Common myeloid progenitor, CD34-positive (primary cell): ENCODE measurements at regions of chr14 and their contacts with region 1.

Region 1: DNA sequence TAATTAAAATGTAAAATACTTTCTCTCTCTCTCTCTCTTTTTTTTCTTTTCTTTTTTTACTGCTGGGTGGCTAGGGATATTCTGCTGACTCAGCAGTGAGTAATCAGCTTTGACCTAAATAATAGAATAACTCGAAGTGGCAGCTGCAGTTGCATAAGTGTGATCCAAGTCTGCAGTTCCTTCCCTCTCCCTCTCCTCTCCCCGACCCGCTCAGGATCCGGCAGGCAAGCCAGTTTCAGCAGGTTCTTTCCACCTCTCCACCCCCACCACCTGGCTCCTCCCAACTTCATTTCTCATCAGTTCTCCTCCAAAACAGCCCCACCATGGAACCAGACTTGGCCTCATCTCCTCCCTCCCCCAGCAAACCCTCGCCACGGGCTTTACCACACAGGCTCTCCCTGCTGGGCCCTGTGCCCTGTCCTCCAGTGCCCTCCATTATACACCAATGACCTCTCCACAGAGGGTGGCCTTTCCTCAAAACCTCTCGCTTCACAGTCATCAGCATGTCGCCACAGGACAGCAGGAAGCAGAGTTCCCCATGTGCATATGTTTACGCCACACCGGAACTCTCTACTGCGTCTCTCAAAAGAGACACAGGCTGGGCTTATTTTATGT is 22.4 kb downstream of the SLC7A8 start:
- DNase-seq: peak; percentile 54 to 83 (median 83)
- H3K4me3 ChIP-seq: peak overlapping the region in 1 of 7 experiments; percentile 40
- H3K27ac ChIP-seq: peak overlapping the region in 1 of 2 experiments; percentile 57
- H3K4me1 ChIP-seq: peaks cover 4 to 30% (median 26%) of the 10 kb centered on the region in 4 experiments
- H3K27me3 ChIP-seq: no peaks in the 10 kb centered on the region

Region 2: GRCh38 chr14:23114120-23114458 is 46.9 kb before region 1 on chr14:
- CTCF ChIA-PET with region 1: no interaction called
- POLR2A ChIA-PET with region 1: no interaction called
- DNase-seq: no peak
- H3K4me3 ChIP-seq: no peak overlapping the region
- H3K27ac ChIP-seq: no peak overlapping the region
- H3K4me1 ChIP-seq: peaks cover 2 to 35% (median 22%) of the 10 kb centered on the region in 4 experiments
- H3K27me3 ChIP-seq: peaks cover 0 to 4% (median 0%) of the 10 kb centered on the region in 5 experiments

Region 3: DNA sequence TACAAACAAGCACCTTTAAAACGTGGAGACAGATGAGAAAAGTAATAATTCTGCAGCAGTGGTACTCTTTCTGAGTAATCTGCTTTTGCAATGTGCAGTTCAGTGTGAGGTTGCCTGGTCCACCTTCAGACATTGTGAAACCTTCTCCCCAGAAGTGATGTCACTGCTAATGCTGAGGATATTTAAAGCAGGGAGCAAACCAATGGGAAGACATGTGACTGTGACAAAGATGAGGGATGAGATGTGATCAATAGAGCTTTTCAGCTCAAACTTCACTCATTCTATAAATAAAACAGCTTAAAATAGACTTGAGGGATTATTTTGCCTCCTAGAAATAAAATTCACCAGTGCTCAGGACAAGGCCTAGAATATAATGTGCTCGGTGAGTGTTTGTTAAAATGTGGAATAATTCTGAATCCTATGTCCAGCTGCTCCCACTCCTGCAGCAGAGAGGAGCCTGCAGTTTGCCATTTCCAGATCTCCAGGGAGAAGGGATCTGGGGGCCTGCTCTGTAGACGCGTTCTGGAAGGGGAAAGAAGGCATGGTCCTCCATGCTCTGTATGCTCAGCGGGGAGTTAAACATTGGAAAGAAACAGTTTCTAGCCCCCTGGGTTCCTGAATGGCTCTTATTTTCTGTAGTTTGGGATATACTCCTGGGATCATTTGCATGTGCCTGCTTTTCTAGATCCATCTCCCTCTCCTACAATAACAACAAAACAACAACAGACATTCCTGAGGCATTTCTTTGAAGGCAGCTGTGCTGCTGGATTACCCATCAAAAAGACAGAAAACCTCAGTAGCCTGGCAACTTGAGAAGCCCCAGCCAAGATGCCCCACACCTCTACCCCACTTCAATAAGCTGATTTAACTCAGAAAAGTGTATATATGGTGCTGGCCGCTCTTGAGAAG is 13.5 kb after region 1 on chr14:
- CTCF ChIA-PET with region 1: interaction called, 17 read pairs
- POLR2A ChIA-PET with region 1: no interaction called
- DNase-seq: no peak
- H3K4me3 ChIP-seq: no peak overlapping the region
- H3K27ac ChIP-seq: no peak overlapping the region
- H3K4me1 ChIP-seq: peaks cover 0 to 12% (median 8%) of the 10 kb centered on the region in 4 experiments
- H3K27me3 ChIP-seq: no peaks in the 10 kb centered on the region

Region 4: DNA sequence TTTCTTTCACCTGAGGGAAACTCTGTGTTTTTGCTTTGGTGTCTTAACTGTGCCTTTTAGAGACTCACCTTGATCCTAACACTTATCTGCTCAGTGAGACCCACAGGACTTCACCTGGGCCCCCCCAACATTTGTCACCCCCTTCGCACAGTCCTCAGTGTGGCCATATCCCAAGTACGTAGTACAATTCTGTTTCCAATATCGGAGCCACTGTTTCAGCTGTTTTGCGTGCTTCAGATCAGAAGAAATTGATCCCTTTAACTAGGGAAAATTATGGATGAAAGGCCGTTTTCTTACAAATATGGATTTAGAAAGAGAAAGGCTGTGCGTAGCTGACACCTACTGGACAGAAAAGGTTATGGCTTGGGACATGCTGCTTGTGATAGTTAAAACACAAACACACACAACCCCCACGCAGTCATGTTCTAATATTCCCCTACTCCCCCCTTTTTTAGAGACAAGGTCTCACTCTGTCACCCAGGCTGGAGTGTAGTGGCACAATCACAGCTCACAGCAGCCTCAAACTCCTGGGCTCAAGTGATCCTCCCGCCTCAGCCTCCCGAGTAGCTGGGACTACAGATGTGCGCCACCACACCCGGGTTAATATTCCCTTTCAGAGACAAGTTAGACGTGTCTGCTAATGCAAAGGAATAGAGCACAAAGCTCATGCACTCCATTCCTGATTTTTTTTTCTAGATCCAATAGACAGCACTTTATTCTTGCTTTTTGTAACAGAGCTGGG is 26.1 kb after region 1 on chr14:
- CTCF ChIA-PET with region 1: interaction called, 22 read pairs
- POLR2A ChIA-PET with region 1: no interaction called
- DNase-seq: peak; percentile 66 to 77 (median 71)
- H3K4me3 ChIP-seq: no peak overlapping the region
- H3K27ac ChIP-seq: no peak overlapping the region
- H3K4me1 ChIP-seq: peaks cover 0 to 14% (median 7%) of the 10 kb centered on the region in 4 experiments
- H3K27me3 ChIP-seq: peaks cover 0 to 6% (median 0%) of the 10 kb centered on the region in 5 experiments